Activated CD4-positive, alpha-beta T cell treated with anti-CD3 and anti-CD28 coated beads, Interleukin-2, amount 10 ng/mL, durations not matched to agents 7 days and 5 days (primary cell): ENCODE measurements at regions of chr13 and their contacts with region 1.

Region 1: GRCh38 chr13:99436686-99437416 is 64.4 kb upstream of the TM9SF2 start:
- DNase-seq: peak; percentile 95
- H3K4me3 Mint-ChIP-seq: peak overlapping the region; percentile 9
- H3K27ac Mint-ChIP-seq: peak overlapping the region; percentile 47
- H3K4me1 Mint-ChIP-seq: peaks cover 72% of the 10 kb centered on the region
- H3K27me3 Mint-ChIP-seq: peaks cover 18% of the 10 kb centered on the region

Region 2: DNA sequence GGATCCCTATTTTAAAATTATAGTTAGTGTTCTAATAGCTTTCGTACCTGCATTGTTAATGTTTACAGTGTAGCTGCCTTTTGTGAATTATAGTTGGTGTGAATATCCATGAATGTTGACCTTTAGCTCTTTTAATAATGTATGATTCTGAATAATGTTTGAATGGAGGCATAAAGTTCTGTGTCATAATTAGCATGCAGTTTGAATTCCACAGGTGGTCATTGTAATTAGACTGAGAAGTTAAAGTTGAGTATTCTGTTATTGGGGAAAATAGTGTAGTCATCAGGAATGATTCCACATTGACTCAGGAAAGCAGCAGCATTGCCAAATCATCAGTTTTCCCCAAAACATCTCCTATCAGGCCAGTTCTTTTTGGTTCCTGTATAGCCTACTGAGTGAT is 190.8 kb before region 1 on chr13:
- CTCF ChIA-PET with region 1: no interaction called
- POLR2A ChIA-PET with region 1: no interaction called
- DNase-seq: no peak
- H3K4me3 Mint-ChIP-seq: no peak overlapping the region
- H3K27ac Mint-ChIP-seq: no peak overlapping the region
- H3K4me1 Mint-ChIP-seq: peaks cover 28% of the 10 kb centered on the region
- H3K27me3 Mint-ChIP-seq: no peaks in the 10 kb centered on the region

Region 3: GRCh38 chr13:99269627-99270241 is 167.1 kb before region 1 on chr13:
- CTCF ChIA-PET with region 1: interaction called, 109 read pairs
- POLR2A ChIA-PET with region 1: interaction called, 4 read pairs
- DNase-seq: peak; percentile 58
- H3K4me3 Mint-ChIP-seq: no peak overlapping the region
- H3K27ac Mint-ChIP-seq: peak overlapping the region; percentile 46
- H3K4me1 Mint-ChIP-seq: peaks cover 67% of the 10 kb centered on the region
- H3K27me3 Mint-ChIP-seq: no peaks in the 10 kb centered on the region

Region 4: DNA sequence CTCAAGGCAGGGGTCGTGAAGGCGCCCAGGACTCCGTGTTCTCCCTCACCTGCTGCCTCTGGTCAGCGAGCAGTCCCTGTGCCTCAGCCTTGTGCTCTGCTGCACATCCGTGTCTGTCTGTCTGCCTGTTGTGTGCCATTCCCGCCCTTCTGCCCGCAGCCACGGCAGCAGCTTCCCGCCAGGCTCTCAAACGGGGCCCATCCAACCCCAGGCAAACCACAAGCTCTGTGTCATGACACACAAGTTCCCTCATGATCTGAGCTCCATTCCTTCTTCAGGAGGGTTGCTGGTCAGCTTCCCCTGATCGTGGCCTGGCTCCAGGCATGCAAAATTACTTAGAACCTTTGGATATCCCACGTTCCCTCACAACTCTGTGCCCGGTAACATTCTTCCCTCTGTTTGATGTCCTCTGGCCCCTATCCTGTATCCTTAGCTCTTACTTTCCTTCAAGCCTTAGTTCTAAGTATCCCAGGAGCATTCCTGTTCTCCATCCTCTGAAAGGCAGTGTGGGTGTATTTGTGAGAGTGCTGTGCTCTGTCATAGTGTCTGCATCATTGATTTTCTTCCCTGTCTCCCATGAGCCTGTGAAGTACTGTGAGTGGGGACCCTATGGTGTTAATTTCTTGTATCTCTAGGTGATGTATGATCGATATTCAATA is 132.9 kb before region 1 on chr13:
- CTCF ChIA-PET with region 1: interaction called, 11 read pairs
- POLR2A ChIA-PET with region 1: interaction called, 3 read pairs
- DNase-seq: peak; percentile 58
- H3K4me3 Mint-ChIP-seq: peak overlapping the region; percentile 77
- H3K27ac Mint-ChIP-seq: peak overlapping the region; percentile 91
- H3K4me1 Mint-ChIP-seq: peaks cover 78% of the 10 kb centered on the region
- H3K27me3 Mint-ChIP-seq: no peaks in the 10 kb centered on the region

Region 5: DNA sequence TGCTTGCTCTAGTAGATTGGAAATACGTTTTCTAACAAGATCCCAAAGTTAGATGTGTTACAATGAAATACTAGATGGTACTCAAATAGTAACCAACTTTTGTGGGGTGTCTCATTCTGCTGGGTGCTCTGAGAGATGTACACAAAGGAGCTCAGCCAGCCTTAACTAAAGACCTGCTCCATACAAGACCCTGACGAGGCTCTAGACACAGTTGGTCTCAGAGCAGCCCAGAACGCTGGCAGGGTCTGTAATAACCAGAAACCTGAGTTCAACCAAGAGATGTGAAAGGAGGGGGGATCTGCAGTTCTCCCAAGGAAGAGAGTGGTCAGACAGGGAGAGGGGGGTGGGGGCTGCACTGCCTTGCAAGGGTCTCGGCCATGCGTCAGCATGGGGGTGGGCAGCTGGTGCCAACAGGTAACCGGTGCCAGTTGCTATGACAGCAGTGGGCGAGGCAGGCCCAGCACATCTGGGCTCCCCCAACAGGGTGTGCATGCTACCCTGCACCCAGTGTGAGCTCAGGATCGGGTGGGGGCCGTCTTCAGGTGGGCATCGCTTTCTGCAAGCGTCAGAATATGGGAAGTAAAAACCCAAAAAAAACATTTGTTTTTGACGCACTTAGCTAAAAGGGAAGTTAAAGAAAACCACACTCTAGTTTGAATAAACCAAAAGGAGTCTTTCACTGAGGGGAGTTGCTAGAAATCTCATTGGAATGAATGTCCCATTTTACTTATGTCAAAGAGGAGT is 61.7 kb before region 1 on chr13:
- CTCF ChIA-PET with region 1: interaction called, 13 read pairs
- POLR2A ChIA-PET with region 1: no interaction called
- DNase-seq: no peak
- H3K4me3 Mint-ChIP-seq: peak overlapping the region; percentile 45
- H3K27ac Mint-ChIP-seq: peak overlapping the region; percentile 83
- H3K4me1 Mint-ChIP-seq: peaks cover 90% of the 10 kb centered on the region
- H3K27me3 Mint-ChIP-seq: no peaks in the 10 kb centered on the region

Region 6: GRCh38 chr13:99398071-99398470 is 38.8 kb before region 1 on chr13:
- CTCF ChIA-PET with region 1: interaction called, 11 read pairs
- POLR2A ChIA-PET with region 1: no interaction called
- DNase-seq: no peak
- H3K4me3 Mint-ChIP-seq: no peak overlapping the region
- H3K27ac Mint-ChIP-seq: no peak overlapping the region
- H3K4me1 Mint-ChIP-seq: peaks cover 19% of the 10 kb centered on the region
- H3K27me3 Mint-ChIP-seq: no peaks in the 10 kb centered on the region

Region 7: DNA sequence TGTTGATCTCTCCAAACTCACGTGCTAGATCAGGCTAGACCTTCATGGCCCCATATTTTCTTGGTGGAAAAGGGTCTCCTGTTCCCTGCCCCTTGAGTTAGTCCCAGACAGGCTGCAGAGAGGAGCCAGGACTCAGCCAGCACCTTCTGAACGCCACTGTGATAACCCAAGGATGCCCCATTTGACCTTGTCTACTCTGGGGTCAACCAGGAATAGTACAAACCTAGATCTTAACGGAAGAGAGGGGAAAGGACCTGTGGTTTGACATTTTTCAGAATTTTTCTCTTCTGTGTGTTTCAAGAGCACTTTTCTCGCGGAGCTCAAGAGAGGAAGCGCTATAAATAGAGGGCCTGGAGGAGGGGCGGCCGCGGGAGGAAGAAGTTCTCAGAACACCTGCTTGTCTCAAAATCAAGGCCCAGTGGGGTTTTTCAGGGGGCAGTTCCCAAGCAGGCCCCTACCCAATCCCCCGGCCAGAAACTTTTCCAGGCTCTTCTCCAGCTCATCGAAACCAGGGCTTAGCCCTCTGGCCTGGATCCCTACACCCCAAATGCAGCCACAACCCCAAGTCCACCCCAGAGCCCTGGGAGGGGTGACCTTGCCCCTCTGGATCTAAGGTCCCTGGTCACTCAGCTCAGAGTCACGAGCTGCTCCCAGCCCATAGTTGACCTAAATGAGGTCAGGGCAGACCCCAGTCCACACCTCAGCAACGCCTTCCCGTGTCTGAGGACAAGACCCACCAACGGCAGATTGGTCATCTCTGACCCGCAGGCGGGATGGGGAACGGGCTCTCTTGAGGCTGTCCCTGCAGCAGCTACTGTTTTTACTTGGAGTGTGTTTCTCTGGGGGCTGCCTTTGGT is 11.1 kb before region 1 on chr13:
- CTCF ChIA-PET with region 1: interaction called, 87 read pairs
- POLR2A ChIA-PET with region 1: no interaction called
- DNase-seq: peak; percentile 69
- H3K4me3 Mint-ChIP-seq: peak overlapping the region; percentile 41
- H3K27ac Mint-ChIP-seq: peak overlapping the region; percentile 87
- H3K4me1 Mint-ChIP-seq: peaks cover 56% of the 10 kb centered on the region
- H3K27me3 Mint-ChIP-seq: no peaks in the 10 kb centered on the region